ENCODE measurements at regions of chrX and their contacts with region 1.

Region 1: GRCh38 chrX:71565474-71566041 is 12.7 kb upstream of the GCNA start:
- DNase-seq: no peak
- ATAC-seq: no peak
- H3K4me3 ChIP-seq: no peak overlapping the region
- H3K27ac ChIP-seq: no peak overlapping the region
- H3K4me1 ChIP-seq: no peaks in the 10 kb centered on the region
- H3K27me3 ChIP-seq: peaks cover 2% of the 10 kb centered on the region; the same call in 1 of the 2 replicates
- CTCF ChIP-seq: no peak
- POLR2A ChIP-seq: no peak
- RAD21 ChIP-seq: no peak

Region 2: DNA sequence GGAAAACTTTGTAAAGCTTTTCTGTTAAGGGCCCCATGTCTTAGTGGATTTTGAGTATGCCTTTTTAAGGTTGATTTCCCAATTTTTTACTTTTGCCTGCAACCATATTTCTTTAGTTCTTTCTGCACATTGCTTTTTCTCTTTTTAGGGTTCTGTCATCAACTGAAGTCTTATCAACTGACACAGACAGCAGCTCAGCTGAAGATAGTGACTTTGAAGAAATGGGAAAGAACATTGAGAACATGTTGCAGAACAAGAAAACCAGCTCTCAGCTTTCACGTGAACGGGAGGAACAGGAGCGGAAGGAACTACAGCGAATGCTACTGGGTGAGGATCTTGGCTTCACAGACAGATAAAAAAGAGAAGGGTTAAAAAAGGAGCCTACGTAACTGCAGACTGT is 171.6 kb before region 1 on chrX:
- CTCF ChIA-PET with region 1: no interaction called
- POLR2A ChIA-PET with region 1: no interaction called
- dilution Hi-C with region 1: no loop called
- in situ Hi-C with region 1: loop called (anchors 10 kb)
- intact Hi-C with region 1: loop called (anchors 10 kb)
- DNase-seq: no peak
- ATAC-seq: no peak
- H3K4me3 ChIP-seq: no peak overlapping the region
- H3K27ac ChIP-seq: no peak overlapping the region
- H3K4me1 ChIP-seq: no peaks in the 10 kb centered on the region
- H3K27me3 ChIP-seq: no peaks in the 10 kb centered on the region
- CTCF ChIP-seq: no peak
- POLR2A ChIP-seq: no peak
- RAD21 ChIP-seq: no peak

Region 3: DNA sequence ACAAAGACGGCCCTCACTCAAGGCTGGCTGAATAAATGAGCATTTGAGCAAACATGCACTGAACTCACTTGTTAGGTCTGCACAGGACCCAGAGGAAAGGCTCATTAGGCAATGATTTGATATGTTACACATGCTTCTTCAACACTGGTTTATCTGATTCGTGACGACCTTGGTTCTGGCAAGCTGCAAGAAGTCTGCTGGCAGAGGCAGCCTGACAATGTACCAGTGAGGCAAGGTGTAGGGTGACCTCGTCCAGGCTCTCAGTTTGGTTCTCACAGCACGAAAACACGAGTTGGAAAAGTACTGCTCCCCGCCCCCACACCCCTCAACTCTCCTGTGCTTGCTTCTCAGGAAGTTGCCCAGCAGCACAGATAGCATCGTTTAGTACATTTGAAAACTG is 803.2 kb after region 1 on chrX:
- CTCF ChIA-PET with region 1: no interaction called
- POLR2A ChIA-PET with region 1: no interaction called
- dilution Hi-C with region 1: no loop called
- in situ Hi-C with region 1: no loop called
- intact Hi-C with region 1: no loop called
- DNase-seq: no peak
- ATAC-seq: no peak
- H3K4me3 ChIP-seq: no peak overlapping the region
- H3K27ac ChIP-seq: no peak overlapping the region
- H3K4me1 ChIP-seq: no peaks in the 10 kb centered on the region
- H3K27me3 ChIP-seq: peaks cover 28% of the 10 kb centered on the region
- CTCF ChIP-seq: no peak
- POLR2A ChIP-seq: no peak
- RAD21 ChIP-seq: no peak

Measured in IMR-90 (cell line).